ENCODE measurements at regions of chr17 and their contacts with region 1.

Region 1: GRCh38 chr17:28576758-28577465 is at the start of gene ALDOC:
- DNase-seq: peak; percentile 99
- ATAC-seq: peak; percentile 88
- H3K4me3 Mint-ChIP-seq: peak within 1 kb of the TSS; percentile 92
- H3K27ac Mint-ChIP-seq: peak within 1 kb of the TSS; percentile 89
- H3K4me1 Mint-ChIP-seq: peaks cover 20% of the 10 kb centered on the region
- H3K27me3 Mint-ChIP-seq: no peaks in the 10 kb centered on the region
- total RNA-seq, gene ALDOC: 142 to 154 TPM

Region 2: DNA sequence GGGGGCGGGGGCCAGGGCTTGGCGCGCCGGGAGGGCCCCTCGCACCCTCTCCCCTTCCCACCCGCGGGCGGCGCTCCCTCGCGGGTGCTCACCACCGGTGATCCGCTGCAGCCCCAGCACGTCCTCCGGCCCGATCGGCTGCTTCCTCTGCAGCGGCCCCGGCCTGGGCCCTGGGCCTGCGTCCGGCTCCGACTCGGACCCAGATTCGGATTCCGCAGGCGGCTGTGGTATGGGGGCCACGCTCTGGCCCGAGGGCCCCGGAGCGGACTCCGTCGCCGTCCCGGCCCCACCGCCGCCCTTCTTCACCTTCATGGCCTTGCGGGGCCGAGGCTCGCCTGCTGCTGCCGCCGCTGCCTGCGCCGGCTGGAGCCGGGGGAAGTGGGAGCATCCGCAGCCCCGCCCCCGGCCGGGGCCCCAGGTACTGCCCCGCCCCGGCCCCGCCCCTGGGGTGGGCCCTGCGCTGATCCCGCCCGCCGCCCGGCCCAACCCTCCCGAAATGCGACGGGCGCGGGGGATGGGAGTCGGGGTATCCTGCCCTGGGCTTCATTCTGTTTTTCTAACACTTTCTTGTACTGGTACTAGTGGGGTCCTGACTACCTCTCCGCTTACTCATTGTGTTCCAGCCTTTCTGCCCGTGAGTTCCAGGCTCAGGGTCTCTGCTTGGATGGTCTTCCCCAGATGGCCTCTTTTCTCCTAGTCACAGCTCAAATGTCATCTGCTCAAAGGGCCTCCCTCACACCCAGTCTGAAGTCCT is 24.5 kb before region 1 on chr17 and contains the start of gene UNC119:
- POLR2A ChIA-PET with region 1: interaction called, 33 read pairs
- DNase-seq: peak; percentile 91
- ATAC-seq: peak; percentile 60
- H3K4me3 Mint-ChIP-seq: peak within 1 kb of the TSS; percentile 96
- H3K27ac Mint-ChIP-seq: peak within 1 kb of the TSS; percentile 92
- H3K4me1 Mint-ChIP-seq: peaks cover 46% of the 10 kb centered on the region
- H3K27me3 Mint-ChIP-seq: no peaks in the 10 kb centered on the region
- total RNA-seq, gene UNC119: 54.9 to 57.8 TPM

Region 3: GRCh38 chr17:28598799-28599310 is 21.9 kb after region 1 on chr17 and contains the start of gene SPAG5:
- POLR2A ChIA-PET with region 1: interaction called, 33 read pairs
- DNase-seq: peak; percentile 98
- ATAC-seq: peak; percentile 92
- H3K4me3 Mint-ChIP-seq: peak within 1 kb of the TSS; percentile 90
- H3K27ac Mint-ChIP-seq: peak within 1 kb of the TSS; percentile 93
- H3K4me1 Mint-ChIP-seq: peaks cover 16% of the 10 kb centered on the region
- H3K27me3 Mint-ChIP-seq: no peaks in the 10 kb centered on the region
- total RNA-seq, gene SPAG5: 109 to 118 TPM